ENCODE measurements at regions of chr6 and their contacts with region 1.

Region 1: DNA sequence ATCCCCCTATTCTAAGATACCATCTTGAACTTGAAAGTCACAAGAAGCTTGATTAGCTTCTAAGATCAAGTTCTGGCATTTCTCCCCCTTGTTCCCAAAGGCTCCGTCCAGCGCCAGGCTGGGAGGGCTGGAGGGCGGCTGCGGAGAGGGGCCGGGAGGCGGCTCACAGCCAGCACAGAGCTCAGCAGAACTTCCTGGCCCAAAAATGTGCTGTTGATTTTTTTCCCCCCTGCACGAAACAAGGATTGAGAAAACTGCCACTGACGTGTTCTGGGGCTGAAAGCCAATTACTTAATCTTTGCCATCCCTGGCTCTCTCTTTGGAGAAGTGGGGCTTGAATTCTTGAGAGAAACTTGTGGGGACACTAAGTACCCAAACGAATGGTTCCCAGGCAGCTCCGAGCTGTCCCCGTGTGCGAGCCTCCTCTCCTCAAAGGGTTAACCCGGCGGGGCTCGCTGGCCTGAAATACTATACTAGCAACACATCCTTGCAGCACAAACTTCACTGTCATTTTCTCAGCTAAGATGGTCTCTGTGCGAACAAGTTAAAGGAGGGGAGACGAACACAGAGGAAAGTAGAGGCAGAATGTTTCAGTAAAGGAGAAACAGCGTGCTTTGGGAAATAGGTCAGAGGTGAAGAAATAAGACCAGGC is 452 bp downstream of the TRAF3IP2 start:
- DNase-seq: peak in 1 of 2 donors; percentile 96
- H3K4me3 ChIP-seq: peak overlapping the region; percentile 62 to 66
- H3K27ac ChIP-seq: peak overlapping the region; percentile 95
- H3K4me1 ChIP-seq: peaks cover 58% of the 10 kb centered on the region
- H3K27me3 ChIP-seq: no peaks in the 10 kb centered on the region
- CTCF ChIP-seq: no peak
- POLR2A ChIP-seq: peak in 1 of 2 donors; percentile 19

Region 2: DNA sequence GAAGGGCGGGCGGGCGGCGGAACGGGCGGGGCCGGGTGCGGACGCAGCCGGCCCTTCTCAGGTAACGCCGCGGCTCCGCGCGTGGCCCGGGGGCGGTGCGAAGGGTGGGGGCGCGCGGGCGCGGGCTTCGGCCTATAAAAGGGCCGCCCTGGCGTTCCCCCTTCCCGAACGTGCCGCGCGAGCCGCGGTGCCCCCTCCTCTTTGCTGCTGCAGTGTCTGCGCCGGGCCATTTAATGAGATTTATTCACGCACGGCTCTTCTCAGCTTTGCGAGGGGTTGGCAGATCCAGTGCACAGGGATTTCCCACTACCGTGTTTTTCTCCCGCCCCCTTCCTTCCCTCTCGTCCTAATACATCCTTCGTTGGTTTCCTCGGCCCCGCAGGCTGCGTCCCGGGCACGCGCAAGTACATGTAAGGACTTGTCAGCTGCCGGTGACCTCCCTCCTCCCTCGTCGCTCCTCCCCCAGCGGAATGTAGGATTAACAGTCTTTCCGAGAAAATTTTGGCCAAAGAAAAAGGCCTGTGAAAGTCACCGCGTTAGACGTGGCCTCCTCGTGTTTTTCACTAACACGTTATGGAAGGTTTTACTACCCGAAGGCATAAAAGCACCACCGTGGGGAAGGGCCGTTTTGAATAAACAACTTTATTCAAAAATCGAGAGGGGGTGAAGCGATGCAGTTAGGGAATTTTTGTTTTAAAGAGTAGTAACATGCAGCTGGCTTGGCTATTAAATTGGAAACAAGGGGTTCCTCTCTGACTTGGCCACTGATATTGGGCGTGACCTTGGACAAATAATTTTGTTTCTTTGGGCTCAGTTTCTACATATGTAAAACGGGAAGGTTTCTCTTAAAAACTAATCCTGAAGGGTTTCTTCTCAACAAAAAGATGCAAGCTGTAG is 121.2 kb before region 1 on chr6:
- intact Hi-C with region 1: loop called (anchors 2 kb)
- DNase-seq: peak in 1 of 2 donors; percentile 99
- H3K4me3 ChIP-seq: peak overlapping the region; percentile 84 to 89
- H3K27ac ChIP-seq: peak overlapping the region; percentile 99
- H3K4me1 ChIP-seq: peaks cover 26% of the 10 kb centered on the region
- H3K27me3 ChIP-seq: no peaks in the 10 kb centered on the region
- CTCF ChIP-seq: peak in 1 of 3 experiments; percentile 17
- POLR2A ChIP-seq: peak in 1 of 2 donors; percentile 76

Region 3: DNA sequence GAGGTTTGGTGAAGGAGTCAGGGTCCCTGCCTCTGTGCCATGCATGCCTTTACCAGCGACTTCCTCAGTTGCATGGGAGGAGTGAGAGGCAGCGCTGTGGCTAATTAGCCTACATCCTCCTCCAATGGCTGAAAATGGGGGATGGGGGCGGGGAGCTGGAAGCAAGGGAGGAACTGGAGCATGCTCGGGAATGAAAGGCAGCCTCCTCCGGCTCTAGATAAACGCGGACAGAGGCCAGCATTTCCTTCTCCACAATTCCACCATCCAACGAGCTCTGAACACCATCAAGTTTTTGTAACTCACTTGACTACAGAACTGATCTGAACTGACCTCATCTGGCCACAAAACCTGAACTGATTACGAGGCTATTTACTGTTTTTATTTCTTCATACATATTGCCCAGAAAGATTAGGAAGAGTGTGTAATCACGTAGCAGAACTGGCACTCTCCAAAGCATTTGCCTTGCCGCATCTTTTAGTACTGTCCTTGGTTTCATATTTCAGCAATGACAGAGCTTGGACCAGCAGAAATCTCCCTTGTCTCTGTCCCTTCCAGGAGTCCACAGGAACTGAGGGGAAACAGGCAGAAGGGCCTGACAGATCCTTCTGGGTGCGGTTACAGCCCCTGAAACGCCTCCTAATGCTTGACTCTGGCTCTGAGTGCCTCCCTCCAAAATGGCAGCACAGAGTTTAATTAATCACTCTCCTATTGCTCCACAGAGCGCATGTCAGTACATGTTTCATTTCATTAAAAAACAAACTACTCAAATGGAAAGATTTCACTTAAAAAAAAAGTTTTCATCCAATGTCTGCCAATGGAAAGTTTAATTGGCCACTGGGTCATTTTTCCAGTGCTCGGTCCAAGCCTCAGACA is 58.7 kb after region 1 on chr6:
- intact Hi-C with region 1: loop called (anchors 5 kb)
- DNase-seq: no peak
- H3K4me3 ChIP-seq: no peak overlapping the region
- H3K27ac ChIP-seq: peak overlapping the region; percentile 80
- H3K4me1 ChIP-seq: peaks cover 66% of the 10 kb centered on the region
- H3K27me3 ChIP-seq: no peaks in the 10 kb centered on the region
- CTCF ChIP-seq: no peak
- POLR2A ChIP-seq: no peak

Region 4: DNA sequence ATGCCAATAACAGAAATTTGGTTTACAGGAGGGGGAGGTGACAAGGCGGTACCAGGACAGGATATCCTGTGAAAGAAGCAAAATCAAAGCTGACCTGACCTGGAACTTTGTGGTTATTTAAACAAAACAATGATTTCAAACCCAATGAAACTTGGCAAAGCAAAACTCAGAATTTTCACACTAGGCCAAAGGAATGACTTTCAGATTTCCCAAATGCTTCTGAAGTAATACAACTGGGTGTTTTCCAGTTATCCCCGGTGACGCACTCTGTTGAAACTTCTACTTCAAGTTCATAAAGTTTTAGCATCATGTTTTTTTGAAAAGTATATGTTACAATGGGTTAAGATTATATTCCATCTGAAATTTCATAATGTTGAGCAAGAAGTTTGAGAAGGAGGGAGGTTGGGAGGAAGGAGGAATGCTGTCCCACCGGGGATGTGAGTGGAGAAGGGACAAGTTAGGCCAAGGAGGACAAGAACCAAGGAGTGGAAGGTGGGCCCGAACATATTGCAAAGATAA is 78.6 kb after region 1 on chr6:
- intact Hi-C with region 1: loop called (anchors 5 kb)
- DNase-seq: peak in 1 of 2 donors; percentile 90
- H3K4me3 ChIP-seq: no peak overlapping the region
- H3K27ac ChIP-seq: peak overlapping the region; percentile 78
- H3K4me1 ChIP-seq: peaks cover 65% of the 10 kb centered on the region
- H3K27me3 ChIP-seq: no peaks in the 10 kb centered on the region
- CTCF ChIP-seq: no peak
- POLR2A ChIP-seq: no peak

Region 5: GRCh38 chr6:112037783-112038216 is 432.6 kb after region 1 on chr6:
- intact Hi-C with region 1: loop called (anchors 10 kb)
- DNase-seq: peak in 1 of 2 donors; percentile 96
- H3K4me3 ChIP-seq: no peak overlapping the region
- H3K27ac ChIP-seq: peak overlapping the region; percentile 91
- H3K4me1 ChIP-seq: peaks cover 18% of the 10 kb centered on the region
- H3K27me3 ChIP-seq: no peaks in the 10 kb centered on the region
- CTCF ChIP-seq: no peak
- POLR2A ChIP-seq: no peak

Region 6: DNA sequence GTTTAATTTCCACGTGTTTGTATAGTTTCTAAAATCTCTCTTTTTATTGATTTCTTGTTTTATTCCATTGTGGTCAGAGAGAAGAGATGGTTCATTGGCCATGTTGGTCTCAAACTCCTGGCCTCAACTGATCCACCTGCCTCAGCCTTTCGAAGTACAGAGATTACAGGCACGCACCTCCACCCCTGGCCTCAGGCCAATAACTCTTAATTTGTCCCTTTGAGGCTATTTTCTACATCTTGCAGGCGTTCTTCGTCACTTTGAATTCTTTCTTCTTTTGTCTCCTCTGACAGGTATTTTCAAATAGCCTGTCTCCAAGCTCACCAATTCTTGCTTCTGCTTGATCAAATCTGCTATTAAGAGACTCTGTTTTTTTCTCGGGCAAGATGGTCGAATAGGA is 815.5 kb after region 1 on chr6:
- intact Hi-C with region 1: no loop called
- DNase-seq: no peak
- H3K4me3 ChIP-seq: no peak overlapping the region
- H3K27ac ChIP-seq: no peak overlapping the region
- H3K4me1 ChIP-seq: no peaks in the 10 kb centered on the region
- H3K27me3 ChIP-seq: no peaks in the 10 kb centered on the region
- CTCF ChIP-seq: no peak
- POLR2A ChIP-seq: no peak

Measured in vagina (tissue), 2 donors.